Kidney (tissue), 22 donors: ENCODE measurements at regions of chr5 and their contacts with region 1.

Region 1: GRCh38 chr5:115641948-115642347 is 16.1 kb upstream of the TMED7 start:
- DNase-seq: no peak
- H3K4me3 ChIP-seq: no peak overlapping the region
- H3K27ac ChIP-seq: no peak overlapping the region
- H3K4me1 ChIP-seq: no peaks in the 10 kb centered on the region
- H3K27me3 ChIP-seq: no peaks in the 10 kb centered on the region
- CTCF ChIP-seq: no peak

Region 2: GRCh38 chr5:115825948-115826347 is 184.0 kb after region 1 on chr5:
- intact Hi-C with region 1: loop called (anchors 5 kb)
- DNase-seq: no peak
- H3K4me3 ChIP-seq: no peak overlapping the region
- H3K27ac ChIP-seq: no peak overlapping the region
- H3K4me1 ChIP-seq: no peaks in the 10 kb centered on the region
- H3K27me3 ChIP-seq: no peaks in the 10 kb centered on the region
- CTCF ChIP-seq: no peak